ENCODE measurements at regions of chr11 and their contacts with region 1.

Region 1: GRCh38 chr11:62705880-62706849 is 1.1 kb downstream of the BSCL2 start:
- DNase-seq: peak; percentile 97
- H3K4me3 ChIP-seq: peak overlapping the region; percentile 49 to 73 (median 62)
- H3K27ac ChIP-seq: peak overlapping the region; percentile 81 to 88 (median 86)
- H3K4me1 ChIP-seq: peaks cover 0 to 40% (median 36%) of the 10 kb centered on the region in 4 donors
- H3K27me3 ChIP-seq: no peaks in the 10 kb centered on the region
- CTCF ChIP-seq: no peak
- EP300 ChIP-seq: peak in 1 of 4 donors; percentile 6
- POLR2A ChIP-seq: peak; percentile 48 to 60

Region 2: GRCh38 chr11:62233730-62234129 is 472.4 kb before region 1 on chr11:
- intact Hi-C with region 1: no loop called
- DNase-seq: no peak
- H3K4me3 ChIP-seq: no peak overlapping the region
- H3K27ac ChIP-seq: no peak overlapping the region
- H3K4me1 ChIP-seq: no peaks in the 10 kb centered on the region
- H3K27me3 ChIP-seq: peaks cover 0 to 10% (median 0%) of the 10 kb centered on the region in 3 donors
- CTCF ChIP-seq: no peak
- EP300 ChIP-seq: no peak
- POLR2A ChIP-seq: no peak

Region 3: GRCh38 chr11:62556108-62556871 is 149.9 kb before region 1 on chr11:
- intact Hi-C with region 1: no loop called
- DNase-seq: peak; percentile 97
- H3K4me3 ChIP-seq: peak overlapping the region in 2 of 4 donors; percentile 0 to 13
- H3K27ac ChIP-seq: peak overlapping the region; percentile 92 to 100 (median 96)
- H3K4me1 ChIP-seq: peaks cover 0 to 88% (median 82%) of the 10 kb centered on the region in 4 donors
- H3K27me3 ChIP-seq: no peaks in the 10 kb centered on the region
- CTCF ChIP-seq: no peak
- EP300 ChIP-seq: no peak
- POLR2A ChIP-seq: no peak

Region 4: GRCh38 chr11:62612366-62613290 is 93.5 kb before region 1 on chr11 and contains the starts of genes EML3 and ROM1:
- intact Hi-C with region 1: loop called (anchors 5 kb)
- DNase-seq: peak; percentile 96
- H3K4me3 ChIP-seq: peak within 1 kb of the TSS; percentile 53 to 82 (median 62)
- H3K27ac ChIP-seq: peak within 1 kb of the TSS; percentile 88 to 100 (median 96)
- H3K4me1 ChIP-seq: peaks cover 0 to 30% (median 24%) of the 10 kb centered on the region in 4 donors
- H3K27me3 ChIP-seq: no peaks in the 10 kb centered on the region
- CTCF ChIP-seq: peak; percentile 39 to 99 (median 56)
- EP300 ChIP-seq: no peak
- POLR2A ChIP-seq: no peak
- total RNA-seq, gene EML3: 19.6 to 39.5 (median 30.2) TPM
- total RNA-seq, gene ROM1: 5.3 to 13.8 (median 10.1) TPM

Region 5: GRCh38 chr11:62652161-62653006 is 53.8 kb before region 1 on chr11:
- intact Hi-C with region 1: loop called (anchors 5 kb)
- DNase-seq: no peak
- H3K4me3 ChIP-seq: peak overlapping the region; percentile 75 to 95 (median 80)
- H3K27ac ChIP-seq: peak overlapping the region; percentile 92 to 93 (median 92)
- H3K4me1 ChIP-seq: peaks cover 0 to 23% (median 16%) of the 10 kb centered on the region in 4 donors
- H3K27me3 ChIP-seq: no peaks in the 10 kb centered on the region
- CTCF ChIP-seq: no peak
- EP300 ChIP-seq: no peak
- POLR2A ChIP-seq: no peak

Region 6: GRCh38 chr11:62665075-62665598 is 41.0 kb before region 1 on chr11 and contains the starts of genes C11orf98 and CSKMT:
- intact Hi-C with region 1: loop called (anchors 5 kb)
- DNase-seq: peak; percentile 98
- H3K4me3 ChIP-seq: peak within 1 kb of the TSS; percentile 74 to 89 (median 86)
- H3K27ac ChIP-seq: peak within 1 kb of the TSS; percentile 91 to 97 (median 94)
- H3K4me1 ChIP-seq: peaks cover 0 to 40% (median 34%) of the 10 kb centered on the region in 4 donors
- H3K27me3 ChIP-seq: no peaks in the 10 kb centered on the region
- CTCF ChIP-seq: no peak
- EP300 ChIP-seq: no peak
- POLR2A ChIP-seq: peak; percentile 99
- total RNA-seq, gene C11orf98: 24.6 to 47.4 (median 26.9) TPM
- total RNA-seq, gene CSKMT: 2.9 to 6.1 (median 4.0) TPM

Region 7: GRCh38 chr11:62771144-62772021 is 65.2 kb after region 1 on chr11 and contains the start of gene TAF6L:
- intact Hi-C with region 1: no loop called
- DNase-seq: peak; percentile 100
- H3K4me3 ChIP-seq: peak within 1 kb of the TSS; percentile 62 to 73 (median 68)
- H3K27ac ChIP-seq: peak within 1 kb of the TSS; percentile 91 to 96 (median 94)
- H3K4me1 ChIP-seq: peaks cover 0 to 28% (median 22%) of the 10 kb centered on the region in 4 donors
- H3K27me3 ChIP-seq: no peaks in the 10 kb centered on the region
- CTCF ChIP-seq: no peak
- EP300 ChIP-seq: peak in 1 of 4 donors; percentile 10
- POLR2A ChIP-seq: peak; percentile 31 to 42
- total RNA-seq, gene TAF6L: 13.2 to 20.1 (median 16.7) TPM

Region 8: DNA sequence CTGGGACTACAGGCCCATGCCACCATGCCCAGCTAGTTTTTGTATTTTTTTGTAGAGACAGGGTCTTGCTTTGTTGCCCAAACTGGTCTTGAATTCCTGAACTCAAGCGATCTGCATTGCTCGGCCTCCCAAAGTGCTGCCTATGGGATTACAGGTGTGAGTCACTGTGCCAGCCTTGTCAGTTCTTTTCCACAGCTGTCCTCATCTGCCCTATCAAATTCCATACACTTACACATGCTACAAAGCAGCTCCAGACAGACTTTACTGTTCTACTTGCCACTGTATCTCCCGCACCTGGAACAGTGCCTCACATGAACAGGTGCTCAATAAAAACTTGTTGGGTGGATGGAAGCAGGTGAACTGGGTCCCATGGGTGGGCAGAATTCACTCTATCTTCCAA is 117.5 kb after region 1 on chr11:
- intact Hi-C with region 1: no loop called
- DNase-seq: no peak
- H3K4me3 ChIP-seq: no peak overlapping the region
- H3K27ac ChIP-seq: no peak overlapping the region
- H3K4me1 ChIP-seq: peaks cover 0 to 7% (median 3%) of the 10 kb centered on the region in 4 donors
- H3K27me3 ChIP-seq: no peaks in the 10 kb centered on the region
- CTCF ChIP-seq: no peak
- EP300 ChIP-seq: no peak
- POLR2A ChIP-seq: no peak

Measured in sigmoid colon (tissue), 7 donors.